Activated B cell treated with CpG ODN at 0.5 μM for 24 hours (primary cell): ENCODE measurements at regions of chr10 and their contacts with region 1.

Region 1: GRCh38 chr10:68471586-68472408 is at the start of gene DNA2:
- DNase-seq: peak; percentile 73
- ATAC-seq: peak; percentile 91
- H3K4me3 Mint-ChIP-seq: peak within 1 kb of the TSS; percentile 99
- H3K27ac Mint-ChIP-seq: peak within 1 kb of the TSS; percentile 88
- H3K4me1 Mint-ChIP-seq: peaks cover 18% of the 10 kb centered on the region
- H3K27me3 Mint-ChIP-seq: no peaks in the 10 kb centered on the region
- CTCF ChIP-seq: no peak
- total RNA-seq, gene DNA2: 6.6 and 8.1 TPM in 2 replicates

Region 2: GRCh38 chr10:67385089-67385488 is 1086.7 kb before region 1 on chr10:
- CTCF ChIA-PET with region 1: no interaction called
- POLR2A ChIA-PET with region 1: no interaction called
- intact Hi-C with region 1: no loop called
- DNase-seq: no peak
- ATAC-seq: no peak
- H3K4me3 Mint-ChIP-seq: no peak overlapping the region
- H3K27ac Mint-ChIP-seq: no peak overlapping the region
- H3K4me1 Mint-ChIP-seq: no peaks in the 10 kb centered on the region
- H3K27me3 Mint-ChIP-seq: peaks cover 3% of the 10 kb centered on the region
- CTCF ChIP-seq: no peak

Region 3: GRCh38 chr10:68406815-68407548 is 64.8 kb before region 1 on chr10 and contains the start of gene RUFY2:
- CTCF ChIA-PET with region 1: no interaction called
- POLR2A ChIA-PET with region 1: interaction called, 3 read pairs
- intact Hi-C with region 1: loop called (anchors 1 kb)
- DNase-seq: peak; percentile 91
- ATAC-seq: peak; percentile 92
- H3K4me3 Mint-ChIP-seq: peak within 1 kb of the TSS; percentile 92
- H3K27ac Mint-ChIP-seq: peak within 1 kb of the TSS; percentile 85
- H3K4me1 Mint-ChIP-seq: peaks cover 15% of the 10 kb centered on the region
- H3K27me3 Mint-ChIP-seq: no peaks in the 10 kb centered on the region
- CTCF ChIP-seq: no peak
- total RNA-seq, gene RUFY2: 23.1 and 28.5 TPM in 2 replicates